Uterus (tissue), 4 donors: ENCODE measurements at regions of chr10 and their contacts with region 1.

Region 1: GRCh38 chr10:72331601-72332422 is 22.9 kb downstream of the DNAJB12 start:
- DNase-seq: peak; percentile 63 to 71
- H3K4me3 ChIP-seq: no peak overlapping the region
- H3K27ac ChIP-seq: peak overlapping the region; percentile 75 to 87
- H3K4me1 ChIP-seq: peaks cover 12 to 34% of the 10 kb centered on the region in 2 donors
- H3K27me3 ChIP-seq: no peaks in the 10 kb centered on the region
- CTCF ChIP-seq: peak in 1 of 4 experiments; percentile 35
- POLR2A ChIP-seq: peak in 1 of 2 donors; percentile 27

Region 2: GRCh38 chr10:71957546-71958275 is 374.1 kb before region 1 on chr10:
- intact Hi-C with region 1: loop called (anchors 10 kb)
- DNase-seq: no peak
- H3K4me3 ChIP-seq: no peak overlapping the region
- H3K27ac ChIP-seq: no peak overlapping the region
- H3K4me1 ChIP-seq: no peaks in the 10 kb centered on the region
- H3K27me3 ChIP-seq: no peaks in the 10 kb centered on the region
- CTCF ChIP-seq: no peak
- POLR2A ChIP-seq: no peak

Region 3: GRCh38 chr10:72048450-72049124 is 283.2 kb before region 1 on chr10:
- intact Hi-C with region 1: loop called (anchors 5 kb)
- DNase-seq: peak; percentile 94 to 95
- H3K4me3 ChIP-seq: no peak overlapping the region
- H3K27ac ChIP-seq: peak overlapping the region in 1 of 2 donors; percentile 31
- H3K4me1 ChIP-seq: no peaks in the 10 kb centered on the region
- H3K27me3 ChIP-seq: no peaks in the 10 kb centered on the region
- CTCF ChIP-seq: peak; percentile 97 to 100 (median 100)
- POLR2A ChIP-seq: no peak

Region 4: GRCh38 chr10:72273410-72274212 is 58.2 kb before region 1 on chr10 and contains the start of gene DDIT4:
- intact Hi-C with region 1: loop called (anchors 10 kb)
- DNase-seq: peak; percentile 99
- H3K4me3 ChIP-seq: peak within 1 kb of the TSS; percentile 77 to 97
- H3K27ac ChIP-seq: peak within 1 kb of the TSS; percentile 97 to 100
- H3K4me1 ChIP-seq: peaks cover 5 to 9% of the 10 kb centered on the region in 2 donors
- H3K27me3 ChIP-seq: no peaks in the 10 kb centered on the region
- CTCF ChIP-seq: peak in 3 of 4 experiments; percentile 7 to 40 (median 9)
- POLR2A ChIP-seq: peak; percentile 100
- total RNA-seq, gene DDIT4: 118 to 210 (median 145) TPM

Region 5: GRCh38 chr10:72364239-72364777 is 32.5 kb after region 1 on chr10:
- intact Hi-C with region 1: no loop called
- DNase-seq: peak; percentile 89 to 91
- H3K4me3 ChIP-seq: peak overlapping the region in 1 of 2 donors; percentile 16
- H3K27ac ChIP-seq: peak overlapping the region; percentile 40 to 74
- H3K4me1 ChIP-seq: peaks cover 0 to 3% of the 10 kb centered on the region in 2 donors
- H3K27me3 ChIP-seq: no peaks in the 10 kb centered on the region
- CTCF ChIP-seq: peak; percentile 90 to 98 (median 96)
- POLR2A ChIP-seq: peak; percentile 25 to 46